Panc1 (cell line): ENCODE measurements at regions of chr3 and their contacts with region 1.

Region 1: GRCh38 chr3:159804726-159805410 is 183.8 kb upstream of the IL12A start:
- DNase-seq: peak; percentile 73
- ATAC-seq: peak; percentile 99
- H3K4me3 ChIP-seq: no peak overlapping the region
- H3K27ac ChIP-seq: no peak overlapping the region; the same call in 1 of the 2 replicates
- H3K4me1 ChIP-seq: peaks cover 20% of the 10 kb centered on the region
- H3K27me3 ChIP-seq: no peaks in the 10 kb centered on the region
- CTCF ChIP-seq: peak; percentile 96

Region 2: DNA sequence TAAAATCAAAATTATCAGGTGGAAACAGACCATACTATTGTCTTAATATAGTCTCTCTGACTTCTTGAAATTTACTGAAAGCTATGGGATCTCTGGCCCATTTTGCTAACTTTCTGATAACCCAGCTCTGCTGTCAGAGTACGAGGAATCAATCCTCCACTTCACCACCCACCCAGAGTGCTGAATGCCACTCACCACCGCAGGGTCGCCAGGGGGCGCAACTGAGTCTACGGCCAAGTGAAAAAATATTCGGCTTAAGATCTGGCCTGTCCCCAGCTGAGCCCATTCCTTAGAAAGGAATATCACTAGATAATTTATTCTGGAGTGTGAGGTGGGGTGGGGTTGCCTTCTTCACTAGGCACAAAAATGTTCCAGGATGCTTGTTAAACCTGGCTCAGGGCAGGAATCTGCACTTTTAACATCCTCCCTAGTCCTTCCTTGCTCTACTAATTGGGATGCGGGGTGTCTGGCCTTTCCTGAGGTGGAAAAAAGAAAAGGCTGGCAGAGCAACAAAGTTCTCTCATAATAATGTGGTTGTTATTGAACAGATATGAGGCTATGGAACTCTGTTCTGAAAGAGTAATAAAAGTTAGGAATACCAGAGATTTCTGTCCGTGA is 482.4 kb before region 1 on chr3:
- CTCF ChIA-PET with region 1: interaction called, 3 read pairs
- POLR2A ChIA-PET with region 1: no interaction called
- in situ Hi-C with region 1: no loop called
- intact Hi-C with region 1: loop called (anchors 2 kb)
- DNase-seq: peak; percentile 13
- ATAC-seq: peak; percentile 76
- H3K4me3 ChIP-seq: no peak overlapping the region
- H3K27ac ChIP-seq: no peak overlapping the region
- H3K4me1 ChIP-seq: no peaks in the 10 kb centered on the region
- H3K27me3 ChIP-seq: no peaks in the 10 kb centered on the region; the same call in 1 of the 2 replicates
- CTCF ChIP-seq: peak; percentile 93

Region 3: GRCh38 chr3:159616212-159616825 is 188.5 kb before region 1 on chr3:
- CTCF ChIA-PET with region 1: interaction called, 3 read pairs
- POLR2A ChIA-PET with region 1: no interaction called
- in situ Hi-C with region 1: no loop called
- intact Hi-C with region 1: loop called (anchors 1 kb)
- DNase-seq: no peak
- ATAC-seq: peak; percentile 75
- H3K4me3 ChIP-seq: no peak overlapping the region
- H3K27ac ChIP-seq: no peak overlapping the region
- H3K4me1 ChIP-seq: peaks cover 26% of the 10 kb centered on the region
- H3K27me3 ChIP-seq: no peaks in the 10 kb centered on the region
- CTCF ChIP-seq: peak; percentile 86